Caco-2 (cell line): ENCODE measurements at regions of chr10 and their contacts with region 1.

Region 1: GRCh38 chr10:101529725-101530553 is 58.1 kb downstream of the POLL start:
- DNase-seq: peak; percentile 42 to 54
- H3K4me3 ChIP-seq: no peak overlapping the region
- H3K4me3 Mint-ChIP-seq: no peak overlapping the region
- H3K27ac Mint-ChIP-seq: peak overlapping the region; percentile 69
- H3K4me1 ChIP-seq: peaks cover 29% of the 10 kb centered on the region
- H3K4me1 Mint-ChIP-seq: peaks cover 23% of the 10 kb centered on the region
- H3K27me3 ChIP-seq: no peaks in the 10 kb centered on the region
- H3K27me3 Mint-ChIP-seq: no peaks in the 10 kb centered on the region
- CTCF ChIP-seq: no peak

Region 2: GRCh38 chr10:101489355-101489754 is 40.6 kb before region 1 on chr10:
- CTCF ChIA-PET with region 1: no interaction called
- POLR2A ChIA-PET with region 1: no interaction called
- intact Hi-C with region 1: loop called (anchors 2 kb)
- DNase-seq: no peak
- H3K4me3 ChIP-seq: no peak overlapping the region
- H3K4me3 Mint-ChIP-seq: no peak overlapping the region
- H3K27ac Mint-ChIP-seq: no peak overlapping the region
- H3K4me1 ChIP-seq: peaks cover 10% of the 10 kb centered on the region; the same call in 1 of the 2 replicates
- H3K4me1 Mint-ChIP-seq: peaks cover 6% of the 10 kb centered on the region
- H3K27me3 ChIP-seq: no peaks in the 10 kb centered on the region
- H3K27me3 Mint-ChIP-seq: no peaks in the 10 kb centered on the region
- CTCF ChIP-seq: no peak